ENCODE measurements at regions of chr5 and their contacts with region 1.

Region 1: GRCh38 chr5:102681407-102681983 is 73.6 kb upstream of the PAM start:
- DNase-seq: peak; percentile 85
- H3K4me3 ChIP-seq: no peak overlapping the region
- H3K27ac ChIP-seq: no peak overlapping the region
- H3K4me1 ChIP-seq: no peaks in the 10 kb centered on the region
- H3K27me3 ChIP-seq: peaks cover 4 to 8% of the 10 kb centered on the region in 2 experiments
- CTCF ChIP-seq: peak; percentile 83 to 86
- POLR2A ChIP-seq: no peak

Region 2: GRCh38 chr5:102617191-102618187 is 64.0 kb before region 1 on chr5:
- CTCF ChIA-PET with region 1: no interaction called
- POLR2A ChIA-PET with region 1: no interaction called
- dilution Hi-C with region 1: no loop called
- intact Hi-C with region 1: no loop called
- DNase-seq: no peak
- H3K4me3 ChIP-seq: no peak overlapping the region
- H3K27ac ChIP-seq: no peak overlapping the region
- H3K4me1 ChIP-seq: no peaks in the 10 kb centered on the region
- H3K27me3 ChIP-seq: peaks cover 3% of the 10 kb centered on the region in 2 experiments
- CTCF ChIP-seq: no peak
- POLR2A ChIP-seq: no peak

Region 3: GRCh38 chr5:102700120-102700831 is 18.8 kb after region 1 on chr5:
- CTCF ChIA-PET with region 1: interaction called, 22 read pairs
- POLR2A ChIA-PET with region 1: no interaction called
- dilution Hi-C with region 1: no loop called
- intact Hi-C with region 1: no loop called
- DNase-seq: no peak
- H3K4me3 ChIP-seq: no peak overlapping the region
- H3K27ac ChIP-seq: no peak overlapping the region
- H3K4me1 ChIP-seq: no peaks in the 10 kb centered on the region
- H3K27me3 ChIP-seq: no peaks in the 10 kb centered on the region
- CTCF ChIP-seq: no peak
- POLR2A ChIP-seq: no peak

Region 4: DNA sequence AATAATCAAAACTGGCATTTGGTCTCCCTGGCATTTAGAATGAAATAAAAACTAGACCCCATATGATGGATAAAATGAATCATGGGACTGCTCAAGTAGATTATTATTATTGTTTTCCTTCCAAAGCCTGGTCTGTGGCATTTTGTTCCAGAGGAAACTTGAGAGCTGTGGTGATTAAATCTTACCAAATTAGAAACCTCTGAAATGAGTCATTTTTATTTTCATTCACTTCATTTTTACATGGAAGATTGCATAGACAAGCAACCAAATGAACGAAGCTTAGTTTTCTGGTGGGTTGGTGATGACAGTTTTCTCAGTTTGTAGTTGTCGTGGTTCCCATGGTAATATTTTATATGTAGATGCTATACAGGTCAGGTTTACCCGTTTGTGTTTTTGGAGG is 97.0 kb after region 1 on chr5:
- CTCF ChIA-PET with region 1: interaction called, 30 read pairs
- POLR2A ChIA-PET with region 1: no interaction called
- dilution Hi-C with region 1: no loop called
- intact Hi-C with region 1: loop called (anchors 1 kb)
- DNase-seq: peak; percentile 87
- H3K4me3 ChIP-seq: no peak overlapping the region
- H3K27ac ChIP-seq: peak overlapping the region; percentile 11
- H3K4me1 ChIP-seq: peaks cover 21% of the 10 kb centered on the region
- H3K27me3 ChIP-seq: no peaks in the 10 kb centered on the region
- CTCF ChIP-seq: no peak
- POLR2A ChIP-seq: no peak

Region 5: GRCh38 chr5:102832445-102832844 is 150.9 kb after region 1 on chr5:
- CTCF ChIA-PET with region 1: interaction called, 13 read pairs
- POLR2A ChIA-PET with region 1: no interaction called
- dilution Hi-C with region 1: no loop called
- intact Hi-C with region 1: no loop called
- DNase-seq: no peak
- H3K4me3 ChIP-seq: no peak overlapping the region
- H3K27ac ChIP-seq: no peak overlapping the region
- H3K4me1 ChIP-seq: peaks cover 5% of the 10 kb centered on the region
- H3K27me3 ChIP-seq: no peaks in the 10 kb centered on the region
- CTCF ChIP-seq: no peak
- POLR2A ChIP-seq: no peak

Region 6: DNA sequence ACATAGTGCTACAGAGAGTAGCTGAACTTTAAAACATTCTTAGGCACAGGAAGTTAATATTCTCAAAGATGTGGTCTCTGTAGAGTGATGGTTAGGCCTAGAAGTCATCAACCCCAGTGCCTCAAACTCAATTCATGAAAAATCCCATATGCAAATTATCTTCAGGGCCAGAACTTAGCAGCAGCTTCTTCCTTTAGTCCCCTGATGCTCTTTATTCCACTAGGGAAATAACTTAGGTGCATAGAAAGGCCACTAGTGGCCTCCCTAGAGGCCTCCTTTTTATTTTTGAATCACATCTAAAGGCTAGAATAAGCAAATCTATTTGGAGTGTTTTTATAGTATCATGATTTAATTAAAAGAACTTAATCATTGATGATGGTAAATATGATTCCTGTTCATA is 350.1 kb after region 1 on chr5:
- CTCF ChIA-PET with region 1: interaction called, 26 read pairs
- POLR2A ChIA-PET with region 1: no interaction called
- dilution Hi-C with region 1: no loop called
- intact Hi-C with region 1: no loop called
- DNase-seq: no peak
- H3K4me3 ChIP-seq: no peak overlapping the region
- H3K27ac ChIP-seq: no peak overlapping the region
- H3K4me1 ChIP-seq: no peaks in the 10 kb centered on the region
- H3K27me3 ChIP-seq: no peaks in the 10 kb centered on the region
- CTCF ChIP-seq: peak; percentile 19 to 21
- POLR2A ChIP-seq: no peak

Region 7: GRCh38 chr5:103487218-103487617 is 805.7 kb after region 1 on chr5:
- CTCF ChIA-PET with region 1: no interaction called
- POLR2A ChIA-PET with region 1: no interaction called
- dilution Hi-C with region 1: no loop called
- intact Hi-C with region 1: no loop called
- DNase-seq: no peak
- H3K4me3 ChIP-seq: no peak overlapping the region
- H3K27ac ChIP-seq: no peak overlapping the region
- H3K4me1 ChIP-seq: no peaks in the 10 kb centered on the region
- H3K27me3 ChIP-seq: peaks cover 1 to 4% of the 10 kb centered on the region in 2 experiments
- CTCF ChIP-seq: no peak
- POLR2A ChIP-seq: no peak

Measured in endothelial cell of umbilical vein (primary cell).